Activated CD4-positive, alpha-beta T cell treated with anti-CD3 and anti-CD28 coated beads, Interleukin-2, amount 10 ng/mL, durations not matched to agents 24 days and 14 days (primary cell): ENCODE measurements at regions of chr1 and their contacts with region 1.

Region 1: GRCh38 chr1:110963691-110964399 is at the start of gene LRIF1:
- DNase-seq: peak; percentile 100
- H3K4me3 Mint-ChIP-seq: peak within 1 kb of the TSS; percentile 89
- H3K27ac Mint-ChIP-seq: peak within 1 kb of the TSS; percentile 97
- H3K4me1 Mint-ChIP-seq: peaks cover 28% of the 10 kb centered on the region
- H3K27me3 Mint-ChIP-seq: peaks cover 10% of the 10 kb centered on the region
- total RNA-seq, gene LRIF1: 14.0 and 14.4 TPM in 2 replicates

Region 2: DNA sequence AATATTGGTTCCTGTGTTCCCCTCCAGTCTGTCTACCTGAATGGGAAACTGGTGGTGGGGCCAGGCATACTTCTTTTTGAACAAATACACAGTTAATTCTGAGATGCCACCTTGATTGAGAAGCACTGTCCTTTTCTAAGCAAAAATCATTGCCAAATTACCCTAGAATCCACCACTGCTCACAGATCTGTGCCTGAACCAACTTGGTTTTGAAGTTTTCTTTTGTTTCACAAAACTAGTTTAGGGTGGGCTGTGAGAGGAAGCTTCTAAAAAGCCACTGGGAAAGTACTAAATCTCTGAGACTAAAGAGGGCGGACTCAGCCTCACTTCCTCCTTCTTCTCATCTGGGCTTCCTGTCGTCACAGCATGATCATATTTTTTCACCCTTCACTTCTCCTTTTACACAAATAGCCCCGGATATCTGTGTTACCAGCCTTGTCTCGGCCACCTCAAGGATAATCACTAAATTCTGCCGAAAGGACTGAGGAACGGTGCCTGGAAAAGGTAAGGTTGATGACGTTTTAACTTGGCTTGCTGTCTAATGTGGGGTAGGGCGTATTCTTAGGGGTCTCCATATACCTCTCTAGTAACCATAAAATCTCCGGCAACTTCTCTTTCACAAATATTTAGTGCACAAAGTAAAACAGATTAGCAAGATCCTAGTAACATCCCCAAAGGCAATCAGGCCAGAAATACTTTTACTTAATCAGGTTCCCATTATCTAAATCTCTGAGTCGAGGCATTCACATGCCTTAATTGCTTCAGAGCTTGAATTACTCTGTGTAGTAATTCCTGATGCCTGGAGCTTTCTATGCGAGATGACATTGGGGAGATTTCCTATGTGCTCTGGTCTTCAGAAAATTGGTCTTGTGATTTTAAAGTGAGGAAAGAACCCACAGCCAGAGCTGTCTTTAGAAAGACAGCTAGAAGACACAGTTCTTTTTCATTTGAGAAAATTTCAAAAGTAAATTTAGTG is 90.8 kb before region 1 on chr1 and contains the start of gene CD53:
- intact Hi-C with region 1: loop called (anchors 1 kb)
- DNase-seq: peak; percentile 87
- H3K4me3 Mint-ChIP-seq: peak within 1 kb of the TSS; percentile 98
- H3K27ac Mint-ChIP-seq: peak within 1 kb of the TSS; percentile 97
- H3K4me1 Mint-ChIP-seq: peaks cover 34% of the 10 kb centered on the region
- H3K27me3 Mint-ChIP-seq: no peaks in the 10 kb centered on the region
- total RNA-seq, gene CD53: 185 and 190 TPM in 2 replicates

Region 3: GRCh38 chr1:110893908-110894490 is 69.8 kb before region 1 on chr1:
- intact Hi-C with region 1: no loop called
- DNase-seq: peak; percentile 59
- H3K4me3 Mint-ChIP-seq: peak overlapping the region; percentile 37
- H3K27ac Mint-ChIP-seq: peak overlapping the region; percentile 60
- H3K4me1 Mint-ChIP-seq: peaks cover 83% of the 10 kb centered on the region
- H3K27me3 Mint-ChIP-seq: no peaks in the 10 kb centered on the region

Region 4: GRCh38 chr1:111015225-111015624 is 51.4 kb after region 1 on chr1:
- intact Hi-C with region 1: no loop called
- DNase-seq: no peak
- H3K4me3 Mint-ChIP-seq: no peak overlapping the region
- H3K27ac Mint-ChIP-seq: no peak overlapping the region
- H3K4me1 Mint-ChIP-seq: no peaks in the 10 kb centered on the region
- H3K27me3 Mint-ChIP-seq: peaks cover 25% of the 10 kb centered on the region

Region 5: DNA sequence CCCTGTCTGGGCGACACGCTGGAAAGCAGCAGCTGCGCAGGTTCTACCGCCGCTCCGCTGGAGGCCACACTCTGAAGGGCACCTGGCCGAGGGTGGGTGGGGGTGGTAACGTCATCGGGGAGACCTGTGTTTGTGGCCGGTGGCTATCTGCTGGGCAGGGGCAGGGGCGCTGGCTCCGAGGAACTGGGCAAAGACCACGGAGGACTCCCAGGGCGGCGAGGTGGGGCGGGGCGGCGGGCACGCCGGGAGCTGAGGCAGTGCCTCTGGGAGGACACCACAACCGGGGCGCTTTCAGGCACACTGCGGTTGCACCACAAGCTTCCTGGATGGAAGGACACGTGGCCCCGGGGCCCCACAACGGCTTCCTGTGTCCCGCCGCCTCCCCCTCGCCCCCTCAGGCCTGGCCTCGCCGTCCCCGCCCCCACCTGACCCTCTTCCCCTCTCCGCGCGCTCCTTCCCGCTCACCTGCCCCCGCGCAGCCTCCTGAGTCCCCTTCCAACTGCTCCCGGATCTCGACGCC is 239.9 kb after region 1 on chr1:
- intact Hi-C with region 1: loop called (anchors 5 kb)
- DNase-seq: peak; percentile 96
- H3K4me3 Mint-ChIP-seq: peak overlapping the region; percentile 98
- H3K27ac Mint-ChIP-seq: peak overlapping the region; percentile 82
- H3K4me1 Mint-ChIP-seq: peaks cover 55% of the 10 kb centered on the region
- H3K27me3 Mint-ChIP-seq: no peaks in the 10 kb centered on the region